Right ventricle myocardium superior (tissue), 1 donor: ENCODE measurements at regions of chr12 and their contacts with region 1.

Region 1: DNA sequence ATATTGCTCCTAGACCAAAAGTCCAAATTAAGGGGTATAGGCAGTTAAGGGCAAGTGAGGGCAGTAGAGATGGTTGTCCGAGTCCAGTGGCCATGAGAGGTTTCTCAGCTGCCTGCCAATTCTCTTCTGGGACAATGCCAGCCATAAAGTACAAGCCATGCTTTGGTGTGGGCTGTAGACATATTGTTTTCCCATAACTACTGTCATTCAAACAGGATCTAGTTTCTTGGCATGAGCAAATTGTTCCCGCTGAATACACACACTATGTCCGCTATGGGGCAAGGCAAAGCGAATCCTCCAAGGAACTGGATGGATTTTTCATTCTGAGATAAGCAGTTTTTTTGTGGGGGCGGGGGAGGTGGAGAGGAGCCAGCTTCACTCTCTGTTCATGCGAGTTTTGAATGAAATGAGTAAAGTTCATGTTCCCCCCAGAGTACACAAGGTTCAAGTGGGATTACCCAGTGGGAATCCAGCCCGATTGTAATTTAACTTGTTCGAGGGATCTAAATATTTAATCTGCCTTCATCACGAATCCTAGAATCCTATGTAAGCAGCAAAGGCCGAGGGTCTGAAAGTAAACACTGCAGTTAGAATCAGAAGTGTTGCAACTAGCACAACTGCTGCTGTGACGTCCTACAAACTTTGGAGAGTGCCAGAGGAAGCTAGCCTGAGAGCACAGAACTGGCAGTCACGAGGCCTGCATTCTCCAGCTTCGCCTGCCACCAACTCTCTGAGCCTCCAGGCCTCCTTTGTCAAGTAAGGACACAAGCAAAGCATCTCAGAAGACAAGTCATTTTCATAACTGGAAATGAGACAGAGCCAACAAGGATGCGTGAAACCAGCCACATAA is 137.0 kb downstream of the CRADD start:
- DNase-seq: peak; percentile 87
- ATAC-seq: peak; percentile 92

Region 2: DNA sequence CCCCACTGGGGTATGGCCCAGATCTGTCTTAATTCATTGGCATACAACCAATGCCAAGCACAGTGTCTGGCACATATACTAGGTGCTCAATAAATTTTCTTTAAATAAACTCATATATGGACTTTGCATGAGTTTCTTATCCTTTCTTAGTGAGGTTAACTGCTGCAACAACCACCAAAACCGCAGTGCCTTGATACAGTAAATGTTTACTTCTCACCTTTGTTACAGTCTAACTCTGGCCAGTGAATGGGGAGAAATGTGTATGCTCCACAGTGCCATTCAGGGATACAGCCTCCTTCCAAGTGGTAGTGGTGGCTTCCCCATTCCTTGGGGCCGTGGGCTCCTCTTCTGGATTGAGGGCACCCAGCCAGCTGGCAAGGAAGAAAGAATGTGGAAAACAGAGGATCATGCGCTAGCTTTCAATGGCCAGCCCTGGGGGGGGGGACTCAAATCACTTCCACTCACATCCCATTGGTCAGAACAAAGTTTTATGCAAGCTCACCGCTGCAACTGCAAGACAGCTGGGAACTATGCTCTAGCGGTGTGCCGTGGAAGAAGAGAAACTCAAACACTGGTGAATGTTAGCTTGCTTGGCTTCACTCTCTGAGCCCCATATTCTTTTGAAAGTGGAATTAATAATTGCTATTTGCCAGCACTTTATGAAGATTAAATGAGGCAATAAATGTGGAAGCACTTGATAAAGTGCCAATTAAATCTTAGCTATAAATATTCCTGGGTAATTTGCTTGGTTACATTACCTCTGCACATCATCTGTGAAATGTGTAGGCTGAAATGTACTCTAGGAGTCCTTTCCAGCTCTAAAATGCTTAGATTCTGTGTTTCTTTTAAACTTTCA is 292.7 kb before region 1 on chr12:
- intact Hi-C with region 1: no loop called
- DNase-seq: no peak
- ATAC-seq: no peak

Region 3: DNA sequence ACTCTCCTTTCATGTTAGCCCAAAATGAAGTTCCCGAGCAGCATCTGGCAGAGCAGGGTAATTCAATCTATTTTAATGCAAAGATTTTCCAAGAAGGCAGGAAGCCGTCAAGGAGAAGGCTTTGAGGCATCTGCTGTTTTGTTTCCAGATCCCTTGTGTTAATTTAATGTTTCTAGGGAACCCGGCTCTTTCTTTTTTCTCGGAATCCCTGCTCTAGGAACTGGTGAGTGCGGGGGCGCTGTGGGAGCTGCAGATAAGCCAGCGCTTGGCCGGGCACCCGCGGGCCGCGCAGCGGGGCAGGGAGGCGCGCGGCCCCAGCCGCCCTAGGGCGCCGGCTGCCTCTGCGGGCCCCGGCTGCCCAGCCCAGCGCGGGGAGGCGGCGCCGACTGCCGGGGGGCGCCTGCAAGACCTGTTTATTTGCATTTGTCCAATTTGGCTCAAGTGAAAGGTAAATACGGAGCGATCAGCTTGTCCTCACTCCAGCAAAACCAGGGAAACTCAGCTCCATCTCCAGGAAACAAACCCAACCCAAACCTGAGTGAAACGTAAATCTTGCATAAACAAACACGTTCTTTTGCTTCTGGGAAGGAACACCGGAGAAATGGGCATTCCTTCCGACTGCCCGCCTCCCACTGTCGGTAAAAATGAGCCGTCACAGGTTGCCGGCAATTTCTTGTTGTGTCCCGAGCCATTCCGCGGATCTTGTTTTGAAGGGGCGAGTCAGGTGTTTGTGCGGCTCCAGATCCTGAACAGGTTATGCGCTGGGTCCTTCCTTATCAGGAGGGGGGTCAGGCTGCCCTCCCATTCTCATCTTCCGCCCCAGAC is 71.9 kb before region 1 on chr12:
- intact Hi-C with region 1: loop called (anchors 10 kb)
- DNase-seq: peak; percentile 87
- ATAC-seq: peak; percentile 94

Region 4: GRCh38 chr12:93759512-93760081 is 54.6 kb before region 1 on chr12:
- intact Hi-C with region 1: no loop called
- DNase-seq: no peak
- ATAC-seq: peak; percentile 9

Region 5: DNA sequence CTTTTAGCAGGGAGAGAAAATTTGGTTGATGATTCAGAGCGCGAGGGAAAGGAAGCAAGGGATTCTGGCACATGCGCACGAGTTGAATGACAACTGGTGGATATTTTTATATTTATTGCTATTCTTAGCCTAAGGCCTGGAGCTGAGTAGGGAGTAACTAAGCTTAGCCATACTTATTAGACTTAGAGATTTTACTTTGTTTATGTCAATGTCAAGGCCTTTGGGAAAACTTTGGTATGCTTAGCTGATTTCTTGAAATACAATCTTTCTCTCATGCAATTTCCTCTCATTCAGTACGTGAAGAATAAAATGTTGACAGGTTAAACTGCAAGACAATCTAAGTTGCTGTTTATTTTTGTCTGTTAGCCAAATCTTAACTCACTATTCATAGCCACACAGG is 35.9 kb before region 1 on chr12:
- intact Hi-C with region 1: loop called (anchors 5 kb)
- DNase-seq: peak; percentile 52
- ATAC-seq: peak; percentile 91

Region 6: GRCh38 chr12:93894391-93895088 is 80.3 kb after region 1 on chr12:
- intact Hi-C with region 1: loop called (anchors 10 kb)
- DNase-seq: peak; percentile 94
- ATAC-seq: peak; percentile 92

Region 7: DNA sequence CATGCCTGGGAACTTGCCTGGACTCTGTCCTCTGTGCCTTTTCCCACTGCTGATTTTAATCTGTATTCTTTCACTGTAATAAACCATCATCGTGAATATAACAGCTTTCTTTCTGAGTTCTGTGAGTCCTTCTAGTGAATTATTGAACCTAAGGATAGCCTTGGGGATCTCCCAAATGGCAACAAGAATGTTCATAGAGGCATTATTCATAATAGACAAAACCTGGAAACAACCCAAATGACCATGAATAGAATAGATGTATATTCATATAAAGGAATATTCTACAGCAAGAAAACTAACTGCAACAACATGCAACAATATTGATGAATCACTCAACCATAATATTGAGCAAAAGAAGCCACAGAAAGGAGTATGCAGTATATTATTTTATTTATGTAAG is 690.2 kb after region 1 on chr12:
- intact Hi-C with region 1: no loop called
- DNase-seq: no peak
- ATAC-seq: no peak